ENCODE measurements at regions of chr1 and their contacts with region 1.

Region 1: DNA sequence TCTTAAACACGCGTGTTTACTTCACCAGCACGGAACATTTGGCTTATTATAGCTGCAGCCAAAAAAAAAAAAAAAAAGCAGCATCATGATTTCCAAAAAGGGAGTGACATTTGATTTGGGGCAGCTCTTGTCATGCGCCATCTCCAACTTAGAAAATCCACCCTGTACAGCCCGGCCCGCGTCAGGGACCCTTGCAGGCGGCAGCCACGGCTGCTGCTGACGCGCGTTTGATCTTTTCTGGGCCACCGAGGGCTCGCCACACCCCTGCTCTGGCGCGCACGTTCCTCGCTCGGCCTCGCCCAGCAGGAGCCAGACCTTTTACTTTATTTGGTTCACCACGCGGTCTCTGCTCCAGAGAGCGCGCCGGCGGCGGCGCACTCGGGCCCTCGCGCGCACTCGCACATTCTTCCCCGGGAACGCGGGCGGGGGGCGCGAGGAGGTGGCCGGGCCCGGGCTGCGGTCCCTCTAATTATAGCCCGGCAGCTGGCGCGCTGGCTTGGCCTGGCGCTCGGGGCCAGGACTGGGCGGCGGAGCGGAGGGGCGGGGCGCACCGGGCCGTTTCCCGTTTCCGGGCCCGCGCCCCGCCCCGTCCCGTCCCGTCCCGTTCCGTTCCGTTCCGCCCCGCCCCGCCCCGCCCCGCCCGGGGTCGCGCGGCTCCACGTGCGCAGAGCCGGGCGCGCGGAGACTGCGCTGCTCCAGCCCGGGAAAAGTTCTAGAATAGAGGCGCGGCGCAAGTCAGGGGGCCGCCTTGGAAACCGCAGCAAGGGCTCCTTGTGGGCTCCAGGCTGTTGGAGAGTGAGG is 10.2 kb downstream of the IRF2BP2 start:
- DNase-seq: peak; percentile 81
- ATAC-seq: peak; percentile 72
- H3K4me3 Mint-ChIP-seq: peak overlapping the region; percentile 85
- H3K27ac Mint-ChIP-seq: peak overlapping the region; percentile 95
- H3K4me1 Mint-ChIP-seq: peaks cover 57% of the 10 kb centered on the region
- H3K27me3 Mint-ChIP-seq: no peaks in the 10 kb centered on the region

Region 2: DNA sequence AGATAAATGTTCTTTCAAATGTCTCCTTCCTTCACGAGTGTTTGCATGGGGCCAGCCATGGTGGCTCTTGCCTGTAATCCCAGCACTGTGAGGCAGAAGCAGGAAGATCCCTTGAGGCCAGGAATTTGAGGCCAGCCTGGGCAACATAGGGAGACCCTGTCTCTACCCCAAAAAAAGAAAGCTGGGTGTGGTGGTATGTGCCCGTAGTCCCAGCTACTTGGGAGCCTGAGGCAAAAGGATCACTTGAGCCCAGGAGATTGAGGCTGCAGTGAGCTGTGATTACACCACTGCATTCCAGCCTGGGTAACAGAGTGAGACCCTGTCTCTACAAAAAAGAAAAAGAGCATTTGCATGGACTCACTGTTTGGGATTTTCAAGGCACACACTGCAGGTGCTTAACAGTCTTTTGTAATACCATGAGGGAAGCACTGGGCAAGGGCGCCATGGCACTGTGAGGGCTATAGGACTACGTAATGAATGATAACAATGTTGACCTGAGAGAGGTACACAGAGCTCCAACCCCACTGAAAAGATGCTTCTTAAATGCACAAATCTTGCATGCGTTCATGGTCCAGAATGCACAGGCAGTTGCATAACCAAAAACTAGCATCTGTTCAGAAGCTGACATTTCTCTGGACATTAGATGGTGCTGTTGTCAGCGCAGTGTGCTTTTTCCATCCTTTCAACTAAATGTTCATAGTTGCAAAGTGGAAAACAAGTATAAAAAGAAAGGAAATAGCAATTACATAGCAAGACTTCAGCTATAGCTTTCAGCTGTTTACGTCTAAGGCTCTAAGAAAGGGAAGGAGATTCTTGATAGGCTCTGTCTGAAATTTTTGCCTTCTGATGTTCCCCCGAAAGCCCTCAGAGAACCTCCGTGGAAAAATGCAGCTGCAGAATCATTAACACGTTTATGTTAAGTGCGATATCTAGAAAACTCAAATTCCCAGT is 113.0 kb before region 1 on chr1:
- CTCF ChIA-PET with region 1: interaction called, 19 read pairs
- POLR2A ChIA-PET with region 1: interaction called, 4 read pairs
- DNase-seq: peak; percentile 59
- ATAC-seq: peak; percentile 66
- H3K4me3 Mint-ChIP-seq: no peak overlapping the region
- H3K27ac Mint-ChIP-seq: no peak overlapping the region
- H3K4me1 Mint-ChIP-seq: peaks cover 31% of the 10 kb centered on the region
- H3K27me3 Mint-ChIP-seq: peaks cover 20% of the 10 kb centered on the region

Region 3: DNA sequence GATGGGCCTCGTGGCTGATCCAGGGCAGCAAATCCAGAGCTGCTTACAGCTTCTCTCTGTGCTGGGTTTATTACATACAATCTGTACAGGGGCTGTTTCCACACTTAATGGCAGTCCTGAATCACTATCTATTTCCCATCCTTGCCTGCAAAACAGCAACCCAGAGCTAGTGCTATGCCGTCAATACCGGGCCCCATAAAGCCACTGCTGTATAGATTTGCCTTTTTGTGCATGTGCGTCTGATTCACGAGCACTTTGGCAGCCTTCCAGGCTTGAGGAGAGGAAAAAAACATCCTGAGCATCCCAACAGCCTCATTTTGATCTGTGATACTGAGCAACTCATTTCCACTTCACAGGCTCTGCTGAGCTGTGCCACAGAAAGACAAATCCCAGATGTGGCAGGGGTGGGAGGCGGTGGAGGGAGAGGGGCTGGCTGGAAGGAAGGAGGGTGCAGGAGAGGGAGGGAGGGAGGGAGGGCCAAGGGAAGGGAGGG is 55.7 kb before region 1 on chr1:
- CTCF ChIA-PET with region 1: interaction called, 14 read pairs
- POLR2A ChIA-PET with region 1: no interaction called
- DNase-seq: peak; percentile 37
- ATAC-seq: peak; percentile 70
- H3K4me3 Mint-ChIP-seq: peak overlapping the region; percentile 1
- H3K27ac Mint-ChIP-seq: peak overlapping the region; percentile 74
- H3K4me1 Mint-ChIP-seq: peaks cover 29% of the 10 kb centered on the region
- H3K27me3 Mint-ChIP-seq: no peaks in the 10 kb centered on the region

Region 4: DNA sequence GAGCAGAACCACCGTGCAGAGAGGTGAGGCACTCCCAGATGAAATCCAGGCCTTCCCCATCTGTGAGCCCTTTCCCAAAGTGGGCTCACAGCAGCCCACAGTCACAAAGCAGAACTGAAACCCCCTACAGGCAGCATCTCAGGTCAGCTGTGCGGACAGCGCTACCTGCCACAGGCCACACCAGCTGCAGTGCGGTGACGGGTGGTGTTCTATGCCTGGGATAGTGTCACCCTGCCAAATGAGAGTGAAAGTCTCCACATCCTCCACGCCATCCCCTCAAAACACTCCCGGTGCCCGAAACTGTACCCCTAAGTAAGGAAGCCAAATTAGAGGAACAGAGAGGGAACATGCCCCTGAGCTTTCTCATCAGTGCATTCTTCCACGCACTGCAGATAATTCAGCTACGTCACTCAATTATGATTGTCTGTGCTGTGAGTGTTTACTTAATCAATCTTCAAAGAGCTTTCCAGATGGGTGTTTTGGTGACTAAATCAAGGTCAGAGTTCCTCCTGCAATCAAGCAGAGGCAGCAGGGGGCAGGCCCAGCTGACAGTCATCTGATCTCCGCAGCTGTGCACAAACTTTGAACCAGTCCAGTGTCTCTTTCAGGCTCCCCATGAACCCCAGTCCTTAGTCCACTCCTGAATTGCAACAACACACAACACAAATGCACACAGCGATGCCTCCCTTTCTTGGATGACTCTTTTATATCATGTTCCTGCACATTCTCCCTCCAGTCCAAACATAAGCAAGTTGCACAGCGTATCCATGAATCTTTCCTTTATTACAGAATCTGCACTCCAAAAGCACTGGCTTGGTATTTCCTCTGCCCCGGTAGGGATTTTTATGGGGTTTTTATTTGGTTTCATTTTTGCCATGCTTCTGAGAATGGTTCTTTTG is 378.8 kb after region 1 on chr1:
- CTCF ChIA-PET with region 1: interaction called, 10 read pairs
- POLR2A ChIA-PET with region 1: interaction called, 7 read pairs
- DNase-seq: peak; percentile 54
- ATAC-seq: peak; percentile 9
- H3K4me3 Mint-ChIP-seq: peak overlapping the region; percentile 5
- H3K27ac Mint-ChIP-seq: peak overlapping the region; percentile 91
- H3K4me1 Mint-ChIP-seq: peaks cover 72% of the 10 kb centered on the region
- H3K27me3 Mint-ChIP-seq: no peaks in the 10 kb centered on the region

Measured in activated CD8-positive, alpha-beta T cell treated with anti-CD3 and anti-CD28 coated beads, Interleukin-2, amount 10 ng/mL, durations not matched to agents 7 days and 5 days (primary cell).